Sigmoid colon (tissue), 7 donors: ENCODE measurements at regions of chr17 and their contacts with region 1.

Region 1: GRCh38 chr17:75827252-75828115 is 16.7 kb downstream of the UNC13D start:
- DNase-seq: peak; percentile 91
- H3K4me3 ChIP-seq: peak overlapping the region; percentile 22 to 49 (median 43)
- H3K27ac ChIP-seq: peak overlapping the region; percentile 72 to 86 (median 85)
- H3K4me1 ChIP-seq: peaks cover 0 to 23% (median 17%) of the 10 kb centered on the region in 4 donors
- H3K27me3 ChIP-seq: no peaks in the 10 kb centered on the region
- CTCF ChIP-seq: peak; percentile 69 to 82 (median 78)
- EP300 ChIP-seq: no peak
- POLR2A ChIP-seq: no peak

Region 2: GRCh38 chr17:75764711-75765421 is 62.6 kb before region 1 on chr17 and contains the start of gene GALK1:
- intact Hi-C with region 1: loop called (anchors 5 kb)
- DNase-seq: peak; percentile 89
- H3K4me3 ChIP-seq: peak within 1 kb of the TSS; percentile 58 to 69 (median 65)
- H3K27ac ChIP-seq: peak within 1 kb of the TSS; percentile 78 to 90 (median 88)
- H3K4me1 ChIP-seq: peaks cover 0 to 25% (median 17%) of the 10 kb centered on the region in 4 donors
- H3K27me3 ChIP-seq: no peaks in the 10 kb centered on the region
- CTCF ChIP-seq: peak in 3 of 4 experiments; percentile 32 to 50 (median 36)
- EP300 ChIP-seq: no peak
- POLR2A ChIP-seq: peak; percentile 22 to 57
- total RNA-seq, gene GALK1: 17.2 to 24.6 (median 20.3) TPM

Region 3: GRCh38 chr17:75784473-75785015 is 42.9 kb before region 1 on chr17 and contains the start of gene UNK:
- intact Hi-C with region 1: loop called (anchors 1 kb)
- DNase-seq: peak; percentile 100
- H3K4me3 ChIP-seq: peak within 1 kb of the TSS; percentile 74 to 85 (median 78)
- H3K27ac ChIP-seq: peak within 1 kb of the TSS; percentile 95 to 99 (median 97)
- H3K4me1 ChIP-seq: peaks cover 0 to 49% (median 33%) of the 10 kb centered on the region in 4 donors
- H3K27me3 ChIP-seq: no peaks in the 10 kb centered on the region
- CTCF ChIP-seq: no peak
- EP300 ChIP-seq: peak in 1 of 4 donors; percentile 81
- POLR2A ChIP-seq: peak; percentile 43 to 76
- total RNA-seq, gene UNK: 18.9 to 29.6 (median 26.4) TPM

Region 4: GRCh38 chr17:75896415-75897159 is 69.1 kb after region 1 on chr17 and contains the start of gene TRIM65:
- intact Hi-C with region 1: no loop called
- DNase-seq: peak; percentile 94
- H3K4me3 ChIP-seq: peak within 1 kb of the TSS; percentile 73 to 95 (median 83)
- H3K27ac ChIP-seq: peak within 1 kb of the TSS; percentile 95 to 98 (median 96)
- H3K4me1 ChIP-seq: peaks cover 0 to 39% (median 34%) of the 10 kb centered on the region in 4 donors
- H3K27me3 ChIP-seq: no peaks in the 10 kb centered on the region
- CTCF ChIP-seq: no peak
- EP300 ChIP-seq: no peak
- POLR2A ChIP-seq: peak; percentile 41 to 61
- total RNA-seq, gene TRIM65: 22.4 to 27.5 (median 25.1) TPM

Region 5: DNA sequence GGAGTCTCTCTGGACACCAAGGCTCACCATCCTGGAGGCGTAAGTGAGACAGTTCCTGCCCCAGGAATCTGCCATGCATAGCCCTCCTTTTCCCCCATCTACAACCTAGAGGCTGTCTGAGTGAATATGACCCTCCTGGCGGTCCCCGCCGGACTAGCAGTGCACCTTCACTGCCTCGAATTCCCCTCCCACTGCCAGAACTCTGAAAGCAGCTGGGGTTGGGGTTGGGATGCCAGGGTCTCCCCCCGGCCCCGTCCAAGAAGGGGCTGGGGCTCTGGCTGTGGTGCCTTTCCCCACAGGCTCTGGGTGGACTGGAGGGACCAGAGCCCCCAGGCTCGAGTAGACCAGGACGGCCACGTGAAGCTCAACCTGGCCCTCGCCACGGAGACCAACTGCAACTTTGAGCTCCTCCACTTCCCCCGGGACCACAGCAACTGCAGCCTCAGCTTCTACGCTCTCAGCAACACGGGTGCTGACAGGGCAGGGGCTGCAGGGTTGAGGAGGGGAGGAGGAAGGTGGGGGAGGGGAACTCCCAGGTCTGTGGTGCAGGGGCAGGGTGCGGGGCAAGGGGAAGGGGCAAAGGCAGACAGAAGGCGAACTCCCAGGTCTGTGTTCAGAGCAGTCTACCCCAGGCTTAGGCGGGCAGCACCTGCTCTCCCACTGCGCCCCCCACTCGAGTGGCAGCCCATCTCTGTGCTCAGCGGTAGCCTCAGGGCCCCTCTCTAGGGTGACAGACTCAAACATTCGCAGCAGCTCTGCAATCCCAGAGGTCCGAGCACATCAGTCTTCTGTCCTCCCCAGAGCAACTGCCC is 252.7 kb after region 1 on chr17:
- intact Hi-C with region 1: loop called (anchors 10 kb)
- DNase-seq: no peak
- H3K4me3 ChIP-seq: no peak overlapping the region
- H3K27ac ChIP-seq: no peak overlapping the region
- H3K4me1 ChIP-seq: peaks cover 0 to 39% (median 35%) of the 10 kb centered on the region in 4 donors
- H3K27me3 ChIP-seq: peaks cover 25 to 53% (median 41%) of the 10 kb centered on the region in 3 donors
- CTCF ChIP-seq: no peak
- EP300 ChIP-seq: no peak
- POLR2A ChIP-seq: no peak